Ovary (tissue), 10 donors: ENCODE measurements at regions of chr5 and their contacts with region 1.

Region 1: DNA sequence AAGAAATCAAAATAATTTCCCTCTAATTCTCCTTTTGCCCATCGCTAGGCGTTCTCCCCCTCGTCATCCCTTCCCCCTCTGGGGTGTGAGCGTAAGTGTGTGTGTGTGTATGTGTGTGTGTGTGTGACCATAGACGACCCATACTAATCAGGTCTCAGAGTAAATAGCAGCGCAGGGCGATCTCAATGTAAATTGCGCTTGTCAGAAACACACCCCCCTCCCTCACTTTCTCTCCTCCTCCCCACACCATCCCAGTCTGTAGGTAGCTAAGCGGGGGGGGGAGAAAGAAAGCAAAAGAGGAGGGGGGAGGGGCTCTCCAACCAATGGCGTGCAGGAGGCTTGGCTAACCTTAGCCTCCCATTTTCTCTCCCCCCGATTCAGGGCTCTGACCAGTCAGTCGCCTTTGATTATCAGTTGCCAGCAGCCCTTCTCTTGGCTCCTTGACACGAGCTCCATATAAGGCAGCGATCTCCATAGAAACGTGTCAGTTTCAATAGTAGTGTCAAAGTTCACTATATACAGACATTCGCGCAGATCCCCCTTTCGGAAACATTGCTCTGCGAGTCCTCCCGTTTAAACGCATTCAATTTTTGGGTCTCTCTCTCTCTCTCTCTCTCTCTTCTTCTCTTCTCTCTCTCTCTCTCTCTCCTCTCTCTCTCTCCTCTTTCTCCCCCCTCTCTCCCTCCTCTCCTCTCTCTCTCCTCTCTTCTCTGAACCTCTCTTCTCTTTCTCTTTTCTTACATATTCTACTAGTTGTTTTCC is at the start of gene NR2F1:
- DNase-seq: peak; percentile 83 to 95 (median 90)
- H3K4me3 ChIP-seq: peak within 1 kb of the TSS; percentile 67
- H3K27ac ChIP-seq: peak within 1 kb of the TSS; percentile 55 to 68
- H3K4me1 ChIP-seq: peaks cover 3% of the 10 kb centered on the region
- H3K27me3 ChIP-seq: no peaks in the 10 kb centered on the region
- CTCF ChIP-seq: peak in 2 of 3 donors; percentile 100
- EP300 ChIP-seq: no peak
- POLR2A ChIP-seq: peak; percentile 63
- total RNA-seq, gene NR2F1: 51.6 to 179 (median 71.5) TPM

Region 2: GRCh38 chr5:92916036-92916435 is 666.8 kb before region 1 on chr5:
- intact Hi-C with region 1: loop called in 1 of 4 experiments (anchors 10 kb)
- DNase-seq: no peak
- H3K4me3 ChIP-seq: no peak overlapping the region
- H3K27ac ChIP-seq: no peak overlapping the region
- H3K4me1 ChIP-seq: peaks cover 2% of the 10 kb centered on the region
- H3K27me3 ChIP-seq: no peaks in the 10 kb centered on the region
- CTCF ChIP-seq: no peak
- EP300 ChIP-seq: no peak
- POLR2A ChIP-seq: no peak

Region 3: DNA sequence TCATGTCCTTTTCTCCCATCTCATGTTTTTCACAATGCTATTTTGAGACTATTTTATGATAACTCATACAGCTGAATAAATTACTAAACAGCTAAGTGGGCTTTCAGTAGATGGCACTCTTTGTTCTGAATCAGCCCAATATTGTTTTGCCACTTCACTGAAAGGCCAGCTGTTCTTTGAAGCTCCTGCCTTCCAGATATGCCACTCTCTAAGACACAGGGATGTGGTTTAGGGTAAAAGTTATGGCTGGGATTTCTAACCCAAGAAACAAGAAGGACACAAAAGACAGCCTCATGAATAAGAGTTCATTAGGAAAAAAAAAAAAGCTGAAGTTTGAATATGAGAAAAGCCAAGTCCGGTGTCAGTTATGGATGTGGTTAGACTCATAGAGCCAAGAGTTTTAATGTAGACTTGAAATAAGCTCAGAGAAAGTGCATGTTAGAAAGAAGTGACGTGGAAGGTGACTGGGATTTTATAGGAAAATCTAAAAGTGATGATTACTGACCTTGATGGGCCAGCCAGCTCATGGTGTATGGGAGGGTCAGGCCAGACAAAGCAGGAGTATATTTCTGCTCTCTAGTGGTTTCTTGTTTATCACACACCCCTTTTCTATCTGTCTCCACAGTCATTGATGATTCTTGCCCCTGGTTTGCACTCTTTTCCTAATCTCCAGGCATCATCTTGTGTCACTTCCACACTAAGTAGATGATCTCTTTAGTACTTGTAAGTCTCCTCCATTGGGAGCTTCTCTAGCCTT is 490.3 kb before region 1 on chr5:
- intact Hi-C with region 1: loop called in 2 of 4 experiments (anchors 10 kb)
- DNase-seq: no peak
- H3K4me3 ChIP-seq: no peak overlapping the region
- H3K27ac ChIP-seq: no peak overlapping the region
- H3K4me1 ChIP-seq: no peaks in the 10 kb centered on the region
- H3K27me3 ChIP-seq: no peaks in the 10 kb centered on the region
- CTCF ChIP-seq: peak in 1 of 3 donors; percentile 37
- EP300 ChIP-seq: no peak
- POLR2A ChIP-seq: no peak

Region 4: GRCh38 chr5:93246090-93246855 is 336.6 kb before region 1 on chr5:
- intact Hi-C with region 1: loop called in 3 of 4 experiments (anchors 2 to 5 kb)
- DNase-seq: peak in 3 of 5 donors; percentile 43 to 48 (median 48)
- H3K4me3 ChIP-seq: no peak overlapping the region
- H3K27ac ChIP-seq: peak overlapping the region in 1 of 2 donors; percentile 64
- H3K4me1 ChIP-seq: peaks cover 7% of the 10 kb centered on the region
- H3K27me3 ChIP-seq: no peaks in the 10 kb centered on the region
- CTCF ChIP-seq: no peak
- EP300 ChIP-seq: no peak
- POLR2A ChIP-seq: no peak

Region 5: DNA sequence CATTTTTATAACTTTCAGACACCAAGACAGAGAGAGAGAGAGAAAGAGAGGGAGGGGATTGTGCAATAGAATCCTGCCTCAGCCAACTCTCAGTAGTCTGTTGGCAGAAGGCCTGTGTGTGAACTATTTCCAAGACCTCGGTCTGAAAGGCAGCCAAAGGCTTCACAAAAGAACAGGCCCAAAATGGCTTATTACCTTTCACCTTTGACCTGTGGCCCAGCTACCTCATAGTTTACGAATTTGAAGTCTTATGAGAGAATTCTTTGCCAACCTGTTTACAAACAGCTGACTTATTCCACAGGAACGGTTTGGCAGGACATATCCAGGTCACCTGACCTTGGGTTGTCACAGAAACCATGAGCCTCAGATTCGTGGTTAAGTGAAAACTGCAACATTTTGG is 50.5 kb before region 1 on chr5:
- intact Hi-C with region 1: loop called in 2 of 4 experiments (anchors 5 kb)
- DNase-seq: peak; percentile 90 to 95 (median 92)
- H3K4me3 ChIP-seq: no peak overlapping the region
- H3K27ac ChIP-seq: peak overlapping the region in 1 of 2 donors; percentile 12
- H3K4me1 ChIP-seq: peaks cover 6% of the 10 kb centered on the region
- H3K27me3 ChIP-seq: no peaks in the 10 kb centered on the region
- CTCF ChIP-seq: no peak
- EP300 ChIP-seq: peak; percentile 63
- POLR2A ChIP-seq: no peak

Region 6: DNA sequence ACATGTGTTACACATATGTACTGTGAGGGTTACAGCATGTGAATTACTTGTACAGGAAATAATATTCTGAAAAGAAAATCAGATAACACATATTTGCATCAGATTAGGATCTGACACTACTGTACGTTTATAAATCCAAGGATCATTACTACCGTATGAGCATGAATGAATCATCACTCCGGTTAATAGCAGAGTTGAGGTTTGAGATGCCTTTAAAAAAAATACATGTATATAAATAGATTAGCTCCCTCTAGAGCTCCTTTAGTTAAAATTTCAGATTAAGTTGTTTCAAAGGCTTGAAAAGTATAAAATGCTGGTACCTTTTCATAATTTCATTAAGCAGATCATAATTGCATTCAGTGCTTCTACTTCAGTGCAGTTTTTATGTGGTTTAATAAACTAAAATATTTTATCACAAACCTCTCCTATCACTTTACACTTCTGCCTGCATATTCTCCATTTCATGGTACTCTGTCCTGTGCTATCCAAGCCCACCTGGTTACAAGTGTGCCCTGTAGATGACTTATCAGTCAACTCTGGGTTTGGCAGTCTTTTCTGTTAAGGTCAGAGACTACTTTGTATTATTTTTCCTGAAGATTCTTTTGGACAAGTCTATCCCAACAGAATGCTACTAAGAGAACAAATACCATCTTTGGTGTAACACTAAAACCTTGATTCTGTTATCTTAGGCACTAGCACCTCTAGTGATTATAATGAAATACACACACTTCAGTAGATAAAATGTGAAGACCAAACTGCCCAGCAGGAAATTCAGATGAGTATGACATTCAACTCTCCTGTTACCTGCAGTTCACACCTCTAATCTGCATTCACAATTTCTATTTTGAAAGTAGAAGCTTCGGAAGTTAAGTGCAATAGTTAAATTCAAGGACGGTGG is 206.6 kb after region 1 on chr5:
- intact Hi-C with region 1: loop called in 1 of 4 experiments (anchors 10 kb)
- DNase-seq: no peak
- H3K4me3 ChIP-seq: no peak overlapping the region
- H3K27ac ChIP-seq: no peak overlapping the region
- H3K4me1 ChIP-seq: no peaks in the 10 kb centered on the region
- H3K27me3 ChIP-seq: no peaks in the 10 kb centered on the region
- CTCF ChIP-seq: no peak
- EP300 ChIP-seq: no peak
- POLR2A ChIP-seq: no peak

Region 7: GRCh38 chr5:94745786-94746730 is 1163.2 kb after region 1 on chr5:
- intact Hi-C with region 1: no loop called
- DNase-seq: no peak
- H3K4me3 ChIP-seq: no peak overlapping the region
- H3K27ac ChIP-seq: no peak overlapping the region
- H3K4me1 ChIP-seq: no peaks in the 10 kb centered on the region
- H3K27me3 ChIP-seq: no peaks in the 10 kb centered on the region
- CTCF ChIP-seq: no peak
- EP300 ChIP-seq: no peak
- POLR2A ChIP-seq: no peak